ENCODE measurements at regions of chr4 and their contacts with region 1.

Region 1: GRCh38 chr4:25330905-25331808 is 18.6 kb downstream of the ZCCHC4 start:
- DNase-seq: no peak
- H3K4me3 Mint-ChIP-seq: peak overlapping the region; percentile 75
- H3K27ac Mint-ChIP-seq: peak overlapping the region; percentile 86
- H3K4me1 Mint-ChIP-seq: peaks cover 14% of the 10 kb centered on the region
- H3K27me3 Mint-ChIP-seq: no peaks in the 10 kb centered on the region

Region 2: GRCh38 chr4:25320773-25321172 is 10.4 kb before region 1 on chr4:
- CTCF ChIA-PET with region 1: interaction called, 7 read pairs
- POLR2A ChIA-PET with region 1: interaction called, 5 read pairs
- intact Hi-C with region 1: loop called (anchors 1 kb)
- DNase-seq: no peak
- H3K4me3 Mint-ChIP-seq: no peak overlapping the region
- H3K27ac Mint-ChIP-seq: peak overlapping the region; percentile 79
- H3K4me1 Mint-ChIP-seq: peaks cover 25% of the 10 kb centered on the region
- H3K27me3 Mint-ChIP-seq: no peaks in the 10 kb centered on the region